ENCODE measurements at regions of chr2 and their contacts with region 1.

Region 1: GRCh38 chr2:219308142-219309093 is 783 bp downstream of the PTPRN start:
- DNase-seq: peak; percentile 50 to 81 (median 62)
- ATAC-seq: peak; percentile 81
- H3K4me3 ChIP-seq: no peak overlapping the region
- H3K4me3 Mint-ChIP-seq: no peak overlapping the region
- H3K27ac ChIP-seq: no peak overlapping the region
- H3K27ac Mint-ChIP-seq: no peak overlapping the region
- H3K4me1 ChIP-seq: peaks cover 3% of the 10 kb centered on the region
- H3K4me1 Mint-ChIP-seq: no peaks in the 10 kb centered on the region
- H3K27me3 ChIP-seq: peaks cover 30 to 47% of the 10 kb centered on the region in 2 experiments
- H3K27me3 Mint-ChIP-seq: peaks cover 67% of the 10 kb centered on the region
- CTCF ChIP-seq: no peak

Region 2: GRCh38 chr2:218962859-218963492 is 345.4 kb before region 1 on chr2:
- CTCF ChIA-PET with region 1: no interaction called
- POLR2A ChIA-PET with region 1: no interaction called
- intact Hi-C with region 1: loop called in 1 of 2 experiments (anchors 10 kb)
- DNase-seq: peak; percentile 38 to 73 (median 56)
- ATAC-seq: peak; percentile 48
- H3K4me3 ChIP-seq: no peak overlapping the region
- H3K4me3 Mint-ChIP-seq: no peak overlapping the region
- H3K27ac ChIP-seq: no peak overlapping the region
- H3K27ac Mint-ChIP-seq: no peak overlapping the region
- H3K4me1 ChIP-seq: peaks cover 32% of the 10 kb centered on the region
- H3K4me1 Mint-ChIP-seq: peaks cover 13% of the 10 kb centered on the region
- H3K27me3 ChIP-seq: peaks cover 58 to 75% of the 10 kb centered on the region in 2 experiments
- H3K27me3 Mint-ChIP-seq: peaks cover 79% of the 10 kb centered on the region
- CTCF ChIP-seq: no peak

Measured in CD4-positive, alpha-beta T cell (primary cell).